Endothelial cell of umbilical vein (primary cell): ENCODE measurements at regions of chr5 and their contacts with region 1.

Region 1: DNA sequence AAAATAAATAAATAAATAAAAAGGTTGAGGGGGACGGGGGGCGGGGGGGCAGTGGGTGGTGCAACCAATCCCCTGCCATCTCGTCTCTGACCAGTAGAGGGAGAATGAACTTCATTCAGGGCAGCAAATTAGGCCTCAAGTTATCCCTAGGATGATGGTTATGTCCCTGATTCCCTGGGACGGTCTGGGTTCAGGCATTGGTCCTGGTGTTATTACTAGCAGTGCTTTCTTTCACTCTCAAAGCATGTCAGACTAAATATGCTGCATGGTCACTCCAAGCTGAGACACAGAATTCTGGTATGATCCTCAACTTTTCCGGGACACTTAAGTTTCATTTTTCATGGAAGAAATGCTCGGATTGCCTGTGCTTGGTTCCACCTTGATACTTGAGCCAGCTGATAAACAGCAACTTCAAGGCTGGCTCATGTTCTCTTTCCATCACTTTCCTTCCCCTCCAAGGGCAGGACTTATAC is 59.4 kb downstream of the DAP start:
- DNase-seq: peak; percentile 59
- H3K4me3 ChIP-seq: no peak overlapping the region
- H3K27ac ChIP-seq: peak overlapping the region; percentile 75
- H3K4me1 ChIP-seq: peaks cover 49% of the 10 kb centered on the region
- H3K27me3 ChIP-seq: no peaks in the 10 kb centered on the region
- CTCF ChIP-seq: peak; percentile 20 to 61
- POLR2A ChIP-seq: no peak

Region 2: DNA sequence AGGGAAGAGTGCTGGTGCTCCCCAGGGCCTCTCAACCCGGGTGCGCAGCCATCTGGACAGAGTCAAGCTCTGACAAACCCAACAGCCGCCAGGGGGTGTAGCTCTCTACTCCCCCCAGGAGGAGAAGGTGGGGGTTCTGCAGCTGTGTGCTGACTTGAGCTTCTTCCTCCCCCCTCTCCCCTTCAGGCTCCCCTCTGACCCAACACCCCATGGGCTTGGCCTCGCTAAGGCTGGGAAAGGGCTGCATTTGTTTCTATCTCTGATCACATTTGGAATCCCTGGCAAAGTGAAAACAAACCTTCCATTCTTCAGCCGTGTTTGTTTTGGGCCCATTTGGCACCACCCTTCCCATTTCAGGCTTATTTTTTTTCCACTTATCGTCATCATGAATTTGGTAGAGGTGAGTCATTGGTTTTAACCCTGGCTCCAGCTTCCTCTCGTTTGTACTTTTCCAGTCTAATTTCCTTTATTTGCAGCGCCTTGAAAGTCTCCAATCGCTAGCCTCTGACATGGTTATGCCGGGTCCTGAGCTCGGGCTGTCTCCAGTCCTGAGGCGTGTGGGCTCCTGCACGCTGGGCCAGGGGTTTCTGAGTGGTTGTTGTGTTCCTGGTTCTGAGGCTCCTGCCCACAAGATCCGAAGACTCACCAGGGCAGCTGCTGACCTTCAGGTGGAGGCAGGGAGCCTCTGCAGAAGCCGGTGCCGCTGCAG is 23.4 kb after region 1 on chr5:
- CTCF ChIA-PET with region 1: interaction called, 64 read pairs
- POLR2A ChIA-PET with region 1: interaction called, 3 read pairs
- dilution Hi-C with region 1: no loop called
- intact Hi-C with region 1: loop called (anchors 1 kb)
- DNase-seq: peak; percentile 97
- H3K4me3 ChIP-seq: peak overlapping the region in 1 of 3 experiments; percentile 21
- H3K27ac ChIP-seq: peak overlapping the region; percentile 81
- H3K4me1 ChIP-seq: peaks cover 53% of the 10 kb centered on the region
- H3K27me3 ChIP-seq: no peaks in the 10 kb centered on the region
- CTCF ChIP-seq: peak; percentile 60 to 81
- POLR2A ChIP-seq: peak; percentile 47

Region 3: DNA sequence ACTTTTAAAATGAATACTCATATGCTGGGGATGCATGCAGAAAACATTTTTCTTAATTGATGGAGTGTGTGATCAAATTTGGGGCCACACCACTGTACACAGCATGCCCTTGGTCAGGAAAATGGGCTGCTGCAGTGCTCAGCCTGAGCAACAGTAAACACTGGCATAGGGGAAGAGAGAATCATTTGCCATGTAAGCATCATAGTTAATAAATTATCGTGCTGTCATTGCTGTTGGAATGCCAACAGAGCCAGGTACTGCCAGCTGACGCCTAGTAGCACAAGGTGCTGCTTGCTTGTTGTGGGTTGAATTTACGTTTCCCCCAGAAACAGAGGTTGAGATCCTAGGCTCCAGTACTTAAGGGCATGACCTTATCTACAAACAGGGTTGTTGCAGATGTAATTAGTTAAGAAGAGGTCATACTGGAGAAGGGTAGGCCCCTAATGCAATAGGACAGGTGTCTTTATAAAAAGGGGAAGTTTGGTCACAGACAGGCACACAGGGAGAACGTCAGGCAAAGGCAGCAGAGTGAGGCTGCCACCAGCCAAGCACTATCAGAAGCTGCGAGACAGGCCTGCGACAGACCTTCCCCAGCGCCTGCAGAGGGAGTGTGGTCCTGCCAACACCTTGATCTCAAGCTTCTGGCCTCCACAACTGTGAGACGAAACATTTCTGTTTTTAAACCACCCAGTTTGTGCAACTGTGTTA is 34.1 kb after region 1 on chr5:
- CTCF ChIA-PET with region 1: interaction called, 14 read pairs
- POLR2A ChIA-PET with region 1: no interaction called
- dilution Hi-C with region 1: no loop called
- intact Hi-C with region 1: no loop called
- DNase-seq: no peak
- H3K4me3 ChIP-seq: no peak overlapping the region
- H3K27ac ChIP-seq: no peak overlapping the region
- H3K4me1 ChIP-seq: peaks cover 29% of the 10 kb centered on the region
- H3K27me3 ChIP-seq: no peaks in the 10 kb centered on the region
- CTCF ChIP-seq: no peak
- POLR2A ChIP-seq: no peak

Region 4: DNA sequence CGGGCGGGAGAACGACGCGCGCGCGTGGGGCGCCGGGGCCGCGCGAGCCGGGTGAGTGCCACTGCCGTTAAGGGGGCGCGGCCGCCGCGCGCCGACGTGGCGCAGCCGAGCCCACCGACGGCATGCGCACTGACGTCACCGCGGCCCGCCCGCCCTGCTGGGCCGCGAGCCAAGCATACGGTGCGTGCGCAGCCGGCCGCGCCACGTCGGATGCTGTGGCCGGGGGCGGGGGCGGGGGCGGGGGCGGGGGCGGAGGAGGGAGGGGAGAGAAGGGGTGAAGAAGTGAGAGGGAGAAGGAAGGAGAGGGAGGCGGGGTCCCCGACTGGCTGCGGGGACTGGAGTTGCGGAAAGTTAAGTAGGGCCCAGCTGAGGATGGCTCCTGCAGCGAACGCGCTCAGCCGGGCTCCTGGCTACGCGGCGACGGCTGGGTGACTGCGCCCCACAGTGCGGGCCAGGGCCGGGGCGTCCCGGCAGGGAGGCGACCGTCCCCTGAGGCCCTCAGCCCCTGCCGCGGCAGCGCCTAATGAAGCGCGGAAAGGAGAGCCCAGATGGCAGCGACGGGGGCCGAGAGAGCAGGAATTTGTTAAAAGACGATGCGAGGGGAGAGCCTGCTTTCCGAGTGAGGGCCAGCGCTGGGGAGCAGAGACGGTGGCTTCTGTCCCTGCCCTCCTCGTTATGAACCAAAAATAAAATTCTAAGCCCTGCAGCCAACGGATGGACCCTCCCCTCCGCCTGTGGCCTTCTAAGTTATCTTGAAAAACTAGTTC is 59.7 kb after region 1 on chr5 and contains the start of gene DAP:
- CTCF ChIA-PET with region 1: interaction called, 14 read pairs
- POLR2A ChIA-PET with region 1: no interaction called
- dilution Hi-C with region 1: no loop called
- intact Hi-C with region 1: loop called (anchors 1 kb)
- DNase-seq: peak; percentile 85
- H3K4me3 ChIP-seq: peak within 1 kb of the TSS; percentile 62 to 95 (median 84)
- H3K27ac ChIP-seq: peak within 1 kb of the TSS; percentile 81
- H3K4me1 ChIP-seq: peaks cover 24% of the 10 kb centered on the region
- H3K27me3 ChIP-seq: no peaks in the 10 kb centered on the region
- CTCF ChIP-seq: no peak
- POLR2A ChIP-seq: peak; percentile 59
- total RNA-seq, gene DAP: 173 and 188 TPM in 2 replicates

Region 5: GRCh38 chr5:10775646-10776045 is 74.0 kb after region 1 on chr5:
- CTCF ChIA-PET with region 1: interaction called, 22 read pairs
- POLR2A ChIA-PET with region 1: no interaction called
- dilution Hi-C with region 1: no loop called
- intact Hi-C with region 1: loop called (anchors 5 kb)
- DNase-seq: no peak
- H3K4me3 ChIP-seq: no peak overlapping the region
- H3K27ac ChIP-seq: no peak overlapping the region
- H3K4me1 ChIP-seq: no peaks in the 10 kb centered on the region
- H3K27me3 ChIP-seq: peaks cover 17 to 18% of the 10 kb centered on the region in 2 experiments
- CTCF ChIP-seq: peak; percentile 4 to 32
- POLR2A ChIP-seq: no peak

Region 6: DNA sequence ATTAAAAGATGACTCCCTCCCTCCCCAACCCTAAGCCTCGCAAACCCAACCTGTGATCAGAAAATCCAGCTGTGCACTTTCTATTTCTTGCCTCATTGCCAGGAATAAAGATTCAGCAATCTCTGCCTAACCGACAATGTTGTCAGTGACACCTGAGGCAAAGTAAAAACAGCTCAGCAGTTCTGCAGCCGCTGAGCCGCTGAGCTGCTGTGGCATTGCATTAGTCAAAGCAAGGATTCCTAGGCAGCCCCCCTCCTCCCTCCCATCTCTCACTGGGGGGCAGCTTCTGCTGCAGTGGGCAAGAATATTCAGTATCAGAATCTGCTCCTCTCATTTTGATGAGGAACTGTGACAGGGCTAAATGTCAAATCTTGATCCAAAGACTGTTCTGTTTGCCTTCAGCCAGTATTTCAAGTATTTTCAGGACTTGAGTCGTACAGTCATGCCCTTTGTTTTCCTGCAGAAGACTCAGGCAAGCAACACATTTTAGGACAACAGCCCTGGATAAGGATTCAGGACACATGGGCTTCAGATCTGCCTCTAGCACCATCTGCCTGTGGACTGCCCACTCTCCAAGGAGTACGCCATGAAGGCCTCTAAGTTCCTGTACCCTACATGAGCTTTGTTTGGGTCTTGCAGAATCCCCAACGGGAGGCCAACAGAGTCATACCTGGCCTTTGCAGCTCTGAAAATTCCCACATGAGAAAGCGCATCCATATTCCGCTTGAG is 100.5 kb after region 1 on chr5:
- CTCF ChIA-PET with region 1: interaction called, 11 read pairs
- POLR2A ChIA-PET with region 1: no interaction called
- dilution Hi-C with region 1: no loop called
- intact Hi-C with region 1: no loop called
- DNase-seq: peak; percentile 8
- H3K4me3 ChIP-seq: no peak overlapping the region
- H3K27ac ChIP-seq: no peak overlapping the region
- H3K4me1 ChIP-seq: no peaks in the 10 kb centered on the region
- H3K27me3 ChIP-seq: peaks cover 6 to 15% of the 10 kb centered on the region in 2 experiments
- CTCF ChIP-seq: peak in 1 of 2 donors; percentile 17
- POLR2A ChIP-seq: no peak

Region 7: GRCh38 chr5:10856683-10857337 is 155.2 kb after region 1 on chr5:
- CTCF ChIA-PET with region 1: interaction called, 38 read pairs
- POLR2A ChIA-PET with region 1: no interaction called
- dilution Hi-C with region 1: no loop called
- intact Hi-C with region 1: loop called (anchors 1 kb)
- DNase-seq: peak; percentile 30
- H3K4me3 ChIP-seq: no peak overlapping the region
- H3K27ac ChIP-seq: no peak overlapping the region
- H3K4me1 ChIP-seq: no peaks in the 10 kb centered on the region
- H3K27me3 ChIP-seq: peaks cover 8 to 14% of the 10 kb centered on the region in 2 experiments
- CTCF ChIP-seq: peak; percentile 88 to 94
- POLR2A ChIP-seq: no peak